PC-3 (cell line): ENCODE measurements at regions of chr21 and their contacts with region 1.

Region 1: DNA sequence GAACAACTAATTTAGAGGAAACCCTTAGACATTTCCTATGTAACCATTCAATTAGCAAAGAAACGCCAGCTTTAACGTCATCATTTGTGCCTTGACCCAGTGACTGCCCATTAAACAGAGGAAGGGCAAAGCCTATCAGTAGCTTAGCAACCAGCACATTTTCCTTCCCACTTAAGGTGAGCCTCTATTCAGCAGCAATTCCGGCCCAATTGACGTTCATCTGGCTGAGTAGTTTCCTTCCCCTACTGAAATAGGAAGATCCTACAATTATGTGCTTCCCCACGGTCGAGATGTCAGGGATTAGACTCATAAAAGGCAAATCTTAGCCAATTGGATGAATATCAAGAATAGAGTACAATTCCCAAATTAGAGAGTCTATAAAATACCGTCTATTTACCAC is 482.1 kb upstream of the ADAMTS5 start:
- DNase-seq: no peak
- ATAC-seq: no peak
- H3K4me3 ChIP-seq: no peak overlapping the region
- H3K27ac ChIP-seq: no peak overlapping the region
- H3K4me1 ChIP-seq: no peaks in the 10 kb centered on the region
- H3K27me3 ChIP-seq: no peaks in the 10 kb centered on the region
- CTCF ChIP-seq: no peak

Region 2: DNA sequence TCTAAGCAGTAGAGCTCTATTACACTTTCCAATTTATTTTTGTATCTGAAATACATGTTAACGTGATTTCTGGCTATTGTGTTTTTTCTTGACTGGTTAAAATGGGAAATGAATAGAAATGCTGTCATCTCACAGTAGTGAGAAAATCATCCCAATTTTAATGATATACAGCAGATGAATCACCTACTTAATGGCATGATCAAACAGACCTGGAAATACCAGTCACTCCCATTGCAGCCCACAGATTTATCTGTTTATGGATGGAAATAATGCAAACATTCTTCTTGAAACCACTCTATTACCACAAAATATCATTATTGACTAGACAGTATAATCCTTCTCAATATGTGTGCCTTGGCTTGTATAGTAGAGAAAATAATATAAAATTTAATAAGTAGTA is 15.7 kb after region 1 on chr21:
- CTCF ChIA-PET with region 1: no interaction called
- POLR2A ChIA-PET with region 1: interaction called, 13 read pairs
- intact Hi-C with region 1: no loop called
- DNase-seq: peak; percentile 9
- ATAC-seq: peak; percentile 81
- H3K4me3 ChIP-seq: no peak overlapping the region
- H3K27ac ChIP-seq: no peak overlapping the region
- H3K4me1 ChIP-seq: no peaks in the 10 kb centered on the region
- H3K27me3 ChIP-seq: no peaks in the 10 kb centered on the region
- CTCF ChIP-seq: no peak

Region 3: GRCh38 chr21:27532076-27532475 is 83.1 kb after region 1 on chr21:
- CTCF ChIA-PET with region 1: no interaction called
- POLR2A ChIA-PET with region 1: no interaction called
- intact Hi-C with region 1: no loop called
- DNase-seq: peak; percentile 58
- ATAC-seq: peak; percentile 88
- H3K4me3 ChIP-seq: no peak overlapping the region
- H3K27ac ChIP-seq: no peak overlapping the region
- H3K4me1 ChIP-seq: peaks cover 3% of the 10 kb centered on the region
- H3K27me3 ChIP-seq: no peaks in the 10 kb centered on the region
- CTCF ChIP-seq: no peak

Region 4: DNA sequence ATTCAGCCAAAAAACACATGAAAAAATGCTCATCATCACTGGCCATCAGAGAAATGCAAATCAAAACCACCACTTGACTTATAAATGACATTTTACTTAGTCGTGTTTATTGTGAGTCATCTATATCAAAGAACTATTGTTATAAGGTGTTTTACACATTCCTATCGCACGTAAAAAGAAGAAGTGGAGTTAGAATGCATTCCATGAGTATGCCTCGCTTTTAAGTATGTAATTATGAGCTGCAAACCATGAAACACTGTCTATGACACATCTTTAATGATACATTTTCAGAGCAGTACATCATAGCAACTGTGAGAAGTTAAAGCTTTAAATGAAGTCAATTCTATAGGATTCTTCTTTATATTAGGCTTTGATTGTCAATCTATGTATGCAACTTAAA is 132.2 kb after region 1 on chr21:
- CTCF ChIA-PET with region 1: no interaction called
- POLR2A ChIA-PET with region 1: no interaction called
- intact Hi-C with region 1: no loop called
- DNase-seq: peak; percentile 71
- ATAC-seq: peak; percentile 91
- H3K4me3 ChIP-seq: no peak overlapping the region
- H3K27ac ChIP-seq: no peak overlapping the region
- H3K4me1 ChIP-seq: peaks cover 3% of the 10 kb centered on the region; the same call in 1 of the 2 replicates
- H3K27me3 ChIP-seq: no peaks in the 10 kb centered on the region
- CTCF ChIP-seq: no peak

Region 5: GRCh38 chr21:28099001-28099705 is 650.2 kb after region 1 on chr21:
- CTCF ChIA-PET with region 1: no interaction called
- POLR2A ChIA-PET with region 1: no interaction called
- intact Hi-C with region 1: no loop called
- DNase-seq: no peak
- ATAC-seq: no peak
- H3K4me3 ChIP-seq: no peak overlapping the region
- H3K27ac ChIP-seq: no peak overlapping the region
- H3K4me1 ChIP-seq: no peaks in the 10 kb centered on the region
- H3K27me3 ChIP-seq: no peaks in the 10 kb centered on the region
- CTCF ChIP-seq: no peak